ENCODE measurements at regions of chr5 and their contacts with region 1.

Region 1: DNA sequence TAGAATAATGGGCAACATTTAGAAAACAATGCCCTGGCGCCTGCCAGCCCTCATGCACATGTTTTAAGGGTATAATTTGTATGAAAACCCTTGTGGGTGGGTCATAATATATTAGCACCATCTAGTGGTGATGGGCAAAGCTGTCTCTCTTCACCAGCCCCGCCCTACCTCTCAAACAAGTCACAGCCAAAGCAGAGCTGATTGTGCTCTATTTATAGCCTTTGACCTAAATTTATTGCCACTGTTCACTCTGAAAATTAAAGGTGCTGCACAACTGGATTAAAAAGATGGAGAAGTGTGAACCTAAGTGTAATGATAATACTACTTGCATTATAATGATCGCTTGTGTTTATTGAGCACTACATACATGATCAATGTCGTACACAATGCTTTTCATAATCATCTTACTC is 131.9 kb upstream of the ANKH start:
- DNase-seq: peak; percentile 83
- ATAC-seq: peak; percentile 88
- H3K4me3 ChIP-seq: no peak overlapping the region
- H3K27ac ChIP-seq: no peak overlapping the region
- H3K4me1 ChIP-seq: peaks cover 11% of the 10 kb centered on the region
- H3K27me3 ChIP-seq: peaks cover 9% of the 10 kb centered on the region; the same call in 1 of the 2 replicates
- CTCF ChIP-seq: peak; percentile 94

Region 2: GRCh38 chr5:14727428-14727865 is 276.1 kb before region 1 on chr5:
- CTCF ChIA-PET with region 1: interaction called, 5 read pairs
- POLR2A ChIA-PET with region 1: no interaction called
- intact Hi-C with region 1: loop called (anchors 1 kb)
- DNase-seq: peak; percentile 92
- ATAC-seq: peak; percentile 81
- H3K4me3 ChIP-seq: no peak overlapping the region
- H3K27ac ChIP-seq: no peak overlapping the region
- H3K4me1 ChIP-seq: peaks cover 10% of the 10 kb centered on the region
- H3K27me3 ChIP-seq: no peaks in the 10 kb centered on the region
- CTCF ChIP-seq: peak; percentile 99

Region 3: DNA sequence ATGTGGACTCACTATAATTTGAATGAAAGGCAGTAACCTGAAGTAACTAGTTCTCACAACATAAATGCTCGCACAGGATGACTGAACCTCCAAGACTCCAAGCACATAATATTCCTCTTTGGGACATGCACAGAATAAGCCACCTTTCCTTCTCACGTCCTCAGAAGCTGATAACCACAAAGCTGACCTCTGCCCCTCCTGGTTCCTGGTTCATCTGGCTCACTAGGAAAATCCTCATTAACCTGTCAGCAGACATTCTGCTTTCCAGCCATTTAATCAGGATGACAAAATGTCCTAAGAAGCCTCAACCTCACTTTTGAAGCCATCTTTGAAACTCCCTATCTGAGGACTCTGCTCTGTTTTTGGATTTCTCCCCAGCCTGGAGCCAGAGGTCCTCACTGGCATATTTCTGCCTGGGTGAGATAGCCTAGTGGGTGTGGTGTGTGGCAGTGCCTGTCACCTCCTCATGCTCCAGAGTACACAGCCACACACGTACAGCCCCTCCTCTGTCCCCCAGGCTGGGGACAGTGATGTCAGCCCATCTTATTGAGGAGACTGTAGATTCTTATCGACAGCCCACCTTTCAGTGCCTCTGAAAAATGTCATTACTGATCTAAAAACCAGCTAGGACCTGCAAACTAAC is 142.3 kb before region 1 on chr5:
- CTCF ChIA-PET with region 1: no interaction called
- POLR2A ChIA-PET with region 1: no interaction called
- intact Hi-C with region 1: no loop called
- DNase-seq: no peak
- ATAC-seq: no peak
- H3K4me3 ChIP-seq: no peak overlapping the region
- H3K27ac ChIP-seq: no peak overlapping the region
- H3K4me1 ChIP-seq: peaks cover 16% of the 10 kb centered on the region
- H3K27me3 ChIP-seq: no peaks in the 10 kb centered on the region
- CTCF ChIP-seq: no peak

Region 4: DNA sequence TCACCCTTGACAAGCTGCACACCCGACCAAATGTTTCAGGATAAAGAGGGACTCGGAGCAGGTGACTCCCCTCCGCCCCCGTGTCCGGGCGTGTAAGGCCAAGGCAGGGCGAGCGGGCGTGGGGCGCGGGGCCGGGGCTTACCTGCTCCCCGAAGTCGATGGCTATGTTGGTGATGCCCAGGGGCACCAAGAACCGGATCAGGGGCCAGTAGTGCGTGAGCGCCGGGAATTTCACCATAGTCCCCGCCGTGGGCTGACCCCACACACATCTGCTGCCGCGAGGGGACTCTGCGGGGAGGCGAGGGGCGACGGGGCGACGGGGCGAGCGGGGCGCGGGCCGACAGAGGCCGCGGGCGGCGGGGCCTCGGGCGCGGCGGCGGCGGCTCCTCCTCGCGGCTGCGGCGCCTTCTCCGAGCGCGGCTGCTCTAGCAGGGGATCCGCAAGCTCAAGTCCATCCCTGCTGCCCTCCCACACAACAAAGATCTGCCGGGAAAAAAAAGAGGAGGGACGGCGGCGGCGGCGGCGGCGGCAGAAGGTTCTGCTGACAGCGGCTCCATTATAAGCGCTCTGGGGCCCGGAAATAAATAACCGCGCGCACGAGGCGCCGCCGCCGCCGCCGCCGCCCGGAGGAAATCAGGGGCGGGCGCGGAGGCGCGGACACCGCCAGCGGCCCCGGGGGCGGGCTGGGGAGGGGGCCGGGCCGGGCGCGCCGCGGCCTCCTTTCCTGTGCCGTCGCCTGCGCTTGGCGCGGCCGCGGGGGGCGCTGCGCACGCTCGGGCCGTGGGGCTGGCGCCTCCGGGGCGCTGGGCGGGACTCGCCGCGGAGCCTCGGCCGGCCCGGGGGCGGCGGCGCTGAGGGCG is 132.1 kb before region 1 on chr5 and contains the start of gene ANKH:
- CTCF ChIA-PET with region 1: no interaction called
- POLR2A ChIA-PET with region 1: no interaction called
- intact Hi-C with region 1: loop called (anchors 2 kb)
- DNase-seq: peak; percentile 83
- ATAC-seq: peak; percentile 87
- H3K4me3 ChIP-seq: peak within 1 kb of the TSS; percentile 78
- H3K27ac ChIP-seq: no peak within 1 kb of the TSS
- H3K4me1 ChIP-seq: peaks cover 20% of the 10 kb centered on the region
- H3K27me3 ChIP-seq: peaks cover 40% of the 10 kb centered on the region
- CTCF ChIP-seq: no peak
- total RNA-seq, gene ANKH: 10.9 and 11.6 TPM in 2 replicates

Region 5: DNA sequence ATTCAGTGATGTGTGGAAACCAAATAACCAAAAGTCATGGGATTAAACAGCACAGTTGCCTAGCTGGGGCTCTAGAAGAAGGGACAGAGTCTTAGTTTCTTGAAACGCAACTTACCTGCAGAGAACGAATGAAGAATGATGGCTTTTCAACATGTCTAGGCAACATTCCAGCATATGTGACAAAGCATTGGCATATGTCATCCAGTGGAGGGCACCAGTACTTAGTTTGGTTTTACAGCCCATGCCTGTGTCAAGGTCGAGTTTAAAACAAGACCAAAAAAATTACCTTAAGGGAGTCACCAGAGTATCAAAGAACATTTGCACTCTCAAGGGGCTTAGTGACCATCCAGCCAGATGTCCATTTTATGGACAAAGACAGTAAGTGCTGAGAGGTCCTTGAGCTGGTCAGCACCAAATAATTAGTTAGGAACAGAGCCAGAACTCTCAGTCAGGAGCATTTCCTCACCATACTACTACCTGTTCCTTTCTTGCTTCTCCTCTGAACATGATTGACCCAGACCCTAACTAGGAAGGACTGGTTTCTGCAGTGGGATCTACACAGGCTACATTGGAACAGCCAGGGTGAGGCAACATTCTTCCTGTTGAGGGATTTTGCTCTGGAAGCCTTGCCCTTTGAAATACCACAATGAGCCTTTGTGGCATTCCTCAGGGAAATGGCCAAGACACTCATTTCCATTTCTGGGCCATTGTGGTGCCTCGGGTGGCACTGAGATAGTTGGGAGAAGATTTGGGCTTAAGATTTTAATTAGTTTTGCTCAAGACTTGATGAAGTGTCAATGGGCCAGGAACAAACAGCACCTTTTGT is 56.5 kb before region 1 on chr5:
- CTCF ChIA-PET with region 1: no interaction called
- POLR2A ChIA-PET with region 1: no interaction called
- intact Hi-C with region 1: loop called (anchors 1 kb)
- DNase-seq: peak; percentile 75
- ATAC-seq: no peak
- H3K4me3 ChIP-seq: no peak overlapping the region
- H3K27ac ChIP-seq: no peak overlapping the region
- H3K4me1 ChIP-seq: peaks cover 4% of the 10 kb centered on the region
- H3K27me3 ChIP-seq: peaks cover 7% of the 10 kb centered on the region; the same call in 1 of the 2 replicates
- CTCF ChIP-seq: peak; percentile 77

Region 6: GRCh38 chr5:14958196-14958595 is 45.3 kb before region 1 on chr5:
- CTCF ChIA-PET with region 1: interaction called, 4 read pairs
- POLR2A ChIA-PET with region 1: no interaction called
- intact Hi-C with region 1: loop called (anchors 2 kb)
- DNase-seq: peak; percentile 42
- ATAC-seq: no peak
- H3K4me3 ChIP-seq: no peak overlapping the region
- H3K27ac ChIP-seq: no peak overlapping the region
- H3K4me1 ChIP-seq: peaks cover 21% of the 10 kb centered on the region
- H3K27me3 ChIP-seq: no peaks in the 10 kb centered on the region
- CTCF ChIP-seq: no peak

Region 7: DNA sequence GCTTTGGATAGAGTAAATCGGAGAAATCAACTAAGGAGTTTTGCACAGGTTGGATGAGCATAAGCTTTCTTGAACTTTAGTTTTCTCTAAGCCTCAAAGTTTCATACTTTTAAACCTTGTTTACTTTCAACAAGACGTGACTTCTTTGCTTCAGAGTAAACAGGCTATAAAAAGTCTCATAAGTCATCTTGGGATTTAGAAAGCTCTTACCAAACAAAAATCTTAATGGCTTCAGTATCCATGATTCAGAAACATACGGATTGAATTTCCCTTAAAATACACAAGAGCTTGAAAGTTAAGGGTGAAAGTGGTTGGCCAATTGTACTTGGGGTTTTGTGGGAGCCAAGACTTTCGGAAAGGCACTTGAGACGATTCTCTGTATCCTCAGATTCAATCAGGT is 138.9 kb after region 1 on chr5:
- CTCF ChIA-PET with region 1: no interaction called
- POLR2A ChIA-PET with region 1: no interaction called
- intact Hi-C with region 1: no loop called
- DNase-seq: no peak
- ATAC-seq: no peak
- H3K4me3 ChIP-seq: no peak overlapping the region
- H3K27ac ChIP-seq: no peak overlapping the region
- H3K4me1 ChIP-seq: no peaks in the 10 kb centered on the region
- H3K27me3 ChIP-seq: 0 out of 2 replicates have a peak, but pooled peaks cover 3% of the 10 kb centered on the region
- CTCF ChIP-seq: no peak